Heart right ventricle (tissue), 16 donors: ENCODE measurements at regions of chr10 and their contacts with region 1.

Region 1: GRCh38 chr10:76432274-76433012 is 1001.0 kb downstream of the LRMDA start:
- DNase-seq: peak; percentile 14 to 48
- ATAC-seq: peak in 7 of 8 donors; percentile 28 to 71 (median 47)
- H3K4me3 ChIP-seq: no peak overlapping the region
- H3K27ac ChIP-seq: peak overlapping the region; percentile 46 to 89 (median 82)
- H3K4me1 ChIP-seq: peaks cover 22 to 85% (median 67%) of the 10 kb centered on the region in 9 donors
- H3K27me3 ChIP-seq: no peaks in the 10 kb centered on the region
- CTCF ChIP-seq: no peak

Region 2: GRCh38 chr10:76303682-76304316 is 128.6 kb before region 1 on chr10:
- intact Hi-C with region 1: loop called in 1 of 10 experiments (anchors 10 kb)
- DNase-seq: peak; percentile 59 to 78
- ATAC-seq: peak; percentile 90 to 97 (median 94)
- H3K4me3 ChIP-seq: no peak overlapping the region
- H3K27ac ChIP-seq: no peak overlapping the region
- H3K4me1 ChIP-seq: peaks cover 0 to 34% (median 15%) of the 10 kb centered on the region in 9 donors
- H3K27me3 ChIP-seq: no peaks in the 10 kb centered on the region
- CTCF ChIP-seq: peak; percentile 20 to 72 (median 58)

Region 3: DNA sequence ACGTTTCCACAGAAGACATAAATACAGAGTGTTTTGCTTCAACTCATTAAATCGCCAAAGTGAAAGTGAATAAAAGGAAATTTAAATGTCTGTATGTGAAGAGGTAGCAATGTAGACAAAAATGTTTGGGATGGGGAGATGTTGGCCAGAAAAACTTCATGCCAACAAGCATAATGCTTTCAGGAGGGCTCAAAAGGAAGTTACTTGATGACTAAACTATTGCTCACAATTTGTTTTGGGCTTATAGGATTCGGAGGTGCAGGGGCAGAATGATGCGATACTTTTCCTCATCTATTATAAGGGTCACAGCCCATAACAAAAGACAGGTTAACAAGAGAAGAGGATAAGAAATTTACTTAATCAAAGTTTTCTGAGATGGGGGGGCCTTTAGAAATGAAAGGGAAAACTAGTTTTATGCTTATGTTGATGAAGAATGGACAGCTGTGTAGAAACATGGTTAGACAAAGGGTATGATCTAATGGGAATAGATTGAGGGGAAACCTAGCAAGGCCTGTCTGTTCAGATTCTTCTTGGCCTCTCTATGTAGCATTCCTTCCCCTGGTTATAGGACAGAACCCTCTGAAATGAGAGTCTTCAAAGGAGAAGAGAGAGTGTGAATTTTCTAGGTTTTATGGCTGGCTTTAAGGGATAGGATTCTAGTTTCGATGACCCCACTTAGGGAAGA is 102.4 kb before region 1 on chr10:
- intact Hi-C with region 1: loop called in 2 of 10 experiments (anchors 5 to 10 kb)
- DNase-seq: no peak
- ATAC-seq: no peak
- H3K4me3 ChIP-seq: no peak overlapping the region
- H3K27ac ChIP-seq: no peak overlapping the region
- H3K4me1 ChIP-seq: peaks cover 0 to 20% (median 0%) of the 10 kb centered on the region in 9 donors
- H3K27me3 ChIP-seq: no peaks in the 10 kb centered on the region
- CTCF ChIP-seq: no peak

Region 4: DNA sequence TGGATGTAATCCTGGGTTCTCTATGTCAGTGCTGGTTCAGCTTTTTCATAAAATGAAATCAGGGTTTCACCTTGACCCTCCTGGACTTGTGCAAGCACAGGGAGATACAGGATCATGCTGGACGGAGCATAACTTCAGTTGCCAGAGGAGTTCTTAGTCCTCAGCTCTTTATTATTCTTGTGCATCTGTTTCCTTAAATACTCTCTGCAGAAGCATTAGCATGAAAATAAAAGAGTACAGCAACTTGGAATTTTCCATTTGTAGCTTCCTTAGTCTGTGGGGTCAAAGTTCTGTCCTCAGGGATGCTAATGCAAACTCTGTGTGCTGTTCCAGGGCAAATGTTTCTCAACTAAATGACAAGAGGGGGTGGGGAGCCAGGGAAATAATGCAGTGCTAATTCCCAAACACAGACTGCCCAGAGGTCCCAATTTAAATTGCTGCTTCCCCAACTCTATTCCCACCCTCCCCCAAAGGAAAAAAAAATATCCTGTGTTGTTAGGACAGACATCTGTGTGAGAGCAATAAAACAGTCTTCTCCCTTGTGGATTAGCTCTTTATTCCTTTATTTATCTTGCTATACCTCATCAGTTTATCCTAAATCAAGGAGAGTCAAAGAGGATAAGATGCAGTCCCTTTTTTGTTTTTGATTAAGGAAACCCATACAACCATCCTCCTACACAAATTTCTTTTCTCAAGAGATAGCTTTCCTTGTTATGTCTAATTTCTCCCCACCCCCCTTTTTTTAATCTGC is 96.1 kb before region 1 on chr10:
- intact Hi-C with region 1: loop called in 2 of 10 experiments (anchors 5 to 10 kb)
- DNase-seq: peak in 1 of 2 donors; percentile 70
- ATAC-seq: peak; percentile 75 to 90 (median 79)
- H3K4me3 ChIP-seq: no peak overlapping the region
- H3K27ac ChIP-seq: peak overlapping the region in 4 of 10 donors; percentile 11 to 59 (median 36)
- H3K4me1 ChIP-seq: peaks cover 0 to 46% (median 9%) of the 10 kb centered on the region in 9 donors
- H3K27me3 ChIP-seq: no peaks in the 10 kb centered on the region
- CTCF ChIP-seq: no peak

Region 5: GRCh38 chr10:76882245-76882644 is 449.8 kb after region 1 on chr10:
- intact Hi-C with region 1: loop called in 1 of 10 experiments (anchors 5 kb)
- DNase-seq: peak in 1 of 2 donors; percentile 24
- ATAC-seq: peak in 2 of 8 donors; percentile 43
- H3K4me3 ChIP-seq: no peak overlapping the region
- H3K27ac ChIP-seq: no peak overlapping the region
- H3K4me1 ChIP-seq: peaks cover 0 to 43% (median 8%) of the 10 kb centered on the region in 9 donors
- H3K27me3 ChIP-seq: peaks cover 0 to 6% (median 0%) of the 10 kb centered on the region in 7 donors
- CTCF ChIP-seq: no peak